Dorsolateral prefrontal cortex (tissue), 120 donors: ENCODE measurements at regions of chr16 and their contacts with region 1.

Region 1: GRCh38 chr16:4402439-4403132 is 13.8 kb downstream of the CORO7 start:
- DNase-seq: peak; percentile 76 to 92 (median 85)
- H3K4me3 ChIP-seq: peak overlapping the region in 24 of 59 donors; percentile 6 to 44 (median 26)
- H3K27ac ChIP-seq: peak overlapping the region in 32 of 59 donors; percentile 3 to 86 (median 34)
- H3K27me3 ChIP-seq: no peaks in the 10 kb centered on the region
- CTCF ChIP-seq: peak; percentile 77 to 98 (median 93)

Region 2: GRCh38 chr16:4271176-4272066 is 131.2 kb before region 1 on chr16:
- intact Hi-C with region 1: loop called (anchors 5 kb)
- DNase-seq: peak; percentile 94 to 98 (median 97)
- H3K4me3 ChIP-seq: peak overlapping the region; percentile 58 to 97 (median 88)
- H3K27ac ChIP-seq: peak overlapping the region in 58 of 59 donors; percentile 32 to 97 (median 93)
- H3K27me3 ChIP-seq: no peaks in the 10 kb centered on the region
- CTCF ChIP-seq: peak in 30 of 56 donors; percentile 1 to 54 (median 30)

Region 3: DNA sequence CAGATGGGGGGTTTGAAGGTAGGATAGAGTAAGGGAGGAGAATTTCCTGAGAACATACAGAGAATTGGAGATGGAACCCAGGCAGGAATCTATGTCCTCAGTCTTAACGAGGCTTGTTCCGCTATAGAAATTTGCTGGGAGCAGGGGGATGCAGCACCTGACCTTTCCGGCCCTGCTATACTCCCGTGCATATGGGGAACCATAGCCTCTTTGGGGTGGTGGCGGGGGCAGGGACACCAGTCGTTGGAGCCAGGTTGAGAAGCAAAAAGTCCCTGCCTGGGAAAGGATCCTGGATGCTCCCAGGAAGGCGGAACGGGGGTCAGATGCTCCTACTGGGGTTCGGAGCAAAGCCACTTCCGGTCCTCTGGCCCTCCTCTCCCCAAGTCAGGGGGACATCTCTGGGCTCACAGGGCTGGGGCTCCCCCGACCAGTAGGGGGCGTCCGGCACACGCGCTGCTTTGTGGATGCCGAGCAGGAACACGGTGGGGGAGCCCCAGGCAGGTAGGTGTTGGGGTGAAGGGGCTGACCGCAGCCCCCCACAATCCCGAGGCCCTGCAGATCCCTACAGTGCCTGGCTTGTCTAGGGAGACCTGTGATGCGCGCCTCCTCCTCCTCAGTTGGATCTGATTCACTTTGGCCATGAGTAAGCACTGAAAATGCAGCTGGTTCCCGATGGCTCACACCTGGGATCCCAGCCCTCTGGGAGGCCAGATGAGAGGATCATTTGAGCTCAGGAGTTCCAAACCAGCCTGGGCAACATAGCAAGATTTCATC is 114.3 kb before region 1 on chr16:
- intact Hi-C with region 1: loop called in 1 of 2 experiments (anchors 5 kb)
- DNase-seq: peak; percentile 67 to 86 (median 74)
- H3K4me3 ChIP-seq: peak overlapping the region in 24 of 59 donors; percentile 0 to 44 (median 20)
- H3K27ac ChIP-seq: no peak overlapping the region
- H3K27me3 ChIP-seq: no peaks in the 10 kb centered on the region
- CTCF ChIP-seq: peak; percentile 73 to 98 (median 93)

Region 4: GRCh38 chr16:4358831-4359561 is 43.6 kb before region 1 on chr16:
- intact Hi-C with region 1: loop called (anchors 1 to 2 kb)
- DNase-seq: peak in 8 of 10 donors; percentile 41 to 70 (median 57)
- H3K4me3 ChIP-seq: no peak overlapping the region
- H3K27ac ChIP-seq: peak overlapping the region in 2 of 59 donors; percentile 15 to 36
- H3K27me3 ChIP-seq: no peaks in the 10 kb centered on the region
- CTCF ChIP-seq: peak; percentile 84 to 98 (median 93)